ENCODE measurements at regions of chr19 and their contacts with region 1.

Region 1: DNA sequence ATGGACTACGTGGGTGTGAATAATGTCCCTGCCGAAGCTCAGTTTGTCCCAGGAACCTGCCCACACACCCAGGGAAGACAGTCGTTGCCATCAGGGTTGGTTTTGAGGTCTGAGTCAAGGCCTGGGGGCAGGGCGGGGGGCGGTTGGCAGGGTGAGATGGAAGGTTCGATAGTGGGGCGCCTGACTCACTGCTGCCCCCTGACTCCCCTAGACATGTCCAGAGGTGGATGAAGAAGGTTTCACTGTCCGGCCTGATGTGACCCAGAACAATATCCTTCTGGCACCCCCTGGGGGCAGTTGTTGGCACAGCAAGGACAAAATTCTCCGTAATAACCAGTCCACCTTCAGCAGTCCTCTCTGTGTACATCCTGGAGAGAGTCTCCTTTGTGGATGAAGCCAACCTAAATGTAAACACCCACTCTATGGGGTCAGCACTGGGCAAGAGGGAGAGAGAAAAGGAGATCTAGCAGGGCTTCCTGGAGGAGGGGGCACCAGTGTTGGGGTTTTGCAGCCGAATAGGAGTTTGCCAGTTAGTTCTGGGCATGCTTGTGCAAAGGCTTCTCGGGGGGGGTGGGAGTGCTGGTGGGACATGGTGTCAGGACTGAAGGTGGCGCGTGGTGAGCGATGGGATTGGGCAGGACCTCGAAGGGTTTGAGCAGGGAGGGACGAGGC is 19.6 kb upstream of the B3GNT3 start:
- DNase-seq: peak; percentile 87
- ATAC-seq: peak; percentile 13
- H3K4me3 Mint-ChIP-seq: no peak overlapping the region
- H3K27ac Mint-ChIP-seq: no peak overlapping the region
- H3K4me1 Mint-ChIP-seq: peaks cover 13% of the 10 kb centered on the region
- H3K27me3 Mint-ChIP-seq: no peaks in the 10 kb centered on the region; the same call in 1 of the 2 replicates
- CTCF ChIP-seq: peak; percentile 45; the same call in 1 of the 2 replicates

Region 2: DNA sequence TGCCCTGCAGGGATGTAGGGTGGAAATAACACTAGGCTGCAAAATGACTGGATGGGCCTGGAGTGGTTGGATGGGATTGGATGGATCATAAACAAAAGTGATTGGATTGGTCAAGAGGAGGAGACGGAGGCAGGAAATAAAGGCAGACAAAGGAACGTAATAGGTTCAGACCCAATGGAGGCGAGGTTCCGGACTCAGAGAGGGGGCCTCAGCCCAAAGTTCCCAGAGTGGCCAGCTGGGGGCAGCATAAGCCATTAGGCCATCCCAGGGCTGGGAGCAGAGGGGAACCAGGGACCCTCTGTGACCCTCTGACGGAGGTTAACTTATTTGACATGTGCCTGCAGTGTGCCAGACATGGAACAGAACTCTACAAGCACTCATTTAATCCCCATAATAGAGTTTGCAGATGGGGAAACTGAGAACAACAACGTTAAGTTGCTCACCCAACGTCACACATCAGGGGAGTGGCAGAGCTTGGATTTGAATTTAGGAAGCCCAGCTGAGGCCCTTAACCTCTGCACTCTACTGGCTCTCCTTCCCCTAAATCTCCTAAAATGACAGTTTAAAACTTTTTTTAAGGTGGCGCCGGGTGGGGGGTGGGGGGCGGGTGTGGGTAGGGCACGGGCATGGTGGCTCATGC is 71.4 kb before region 1 on chr19:
- CTCF ChIA-PET with region 1: interaction called, 10 read pairs
- POLR2A ChIA-PET with region 1: no interaction called
- DNase-seq: peak; percentile 89
- ATAC-seq: peak; percentile 83
- H3K4me3 Mint-ChIP-seq: no peak overlapping the region
- H3K27ac Mint-ChIP-seq: no peak overlapping the region
- H3K4me1 Mint-ChIP-seq: peaks cover 4% of the 10 kb centered on the region; the same call in 1 of the 2 replicates
- H3K27me3 Mint-ChIP-seq: peaks cover 30% of the 10 kb centered on the region
- CTCF ChIP-seq: peak; percentile 83

Region 3: GRCh38 chr19:17733127-17733526 is 42.3 kb before region 1 on chr19:
- CTCF ChIA-PET with region 1: no interaction called
- POLR2A ChIA-PET with region 1: no interaction called
- DNase-seq: no peak
- ATAC-seq: no peak
- H3K4me3 Mint-ChIP-seq: no peak overlapping the region
- H3K27ac Mint-ChIP-seq: no peak overlapping the region
- H3K4me1 Mint-ChIP-seq: no peaks in the 10 kb centered on the region
- H3K27me3 Mint-ChIP-seq: no peaks in the 10 kb centered on the region
- CTCF ChIP-seq: no peak

Region 4: GRCh38 chr19:17747205-17748098 is 27.9 kb before region 1 on chr19:
- CTCF ChIA-PET with region 1: interaction called, 14 read pairs
- POLR2A ChIA-PET with region 1: no interaction called
- DNase-seq: peak; percentile 94
- ATAC-seq: peak; percentile 99
- H3K4me3 Mint-ChIP-seq: peak overlapping the region; percentile 66
- H3K27ac Mint-ChIP-seq: no peak overlapping the region
- H3K4me1 Mint-ChIP-seq: peaks cover 9% of the 10 kb centered on the region
- H3K27me3 Mint-ChIP-seq: peaks cover 12% of the 10 kb centered on the region
- CTCF ChIP-seq: no peak

Region 5: GRCh38 chr19:17755977-17756670 is 19.3 kb before region 1 on chr19:
- CTCF ChIA-PET with region 1: interaction called, 22 read pairs
- POLR2A ChIA-PET with region 1: no interaction called
- DNase-seq: peak; percentile 86
- ATAC-seq: peak; percentile 81
- H3K4me3 Mint-ChIP-seq: no peak overlapping the region
- H3K27ac Mint-ChIP-seq: no peak overlapping the region
- H3K4me1 Mint-ChIP-seq: peaks cover 25% of the 10 kb centered on the region
- H3K27me3 Mint-ChIP-seq: no peaks in the 10 kb centered on the region; the same call in 1 of the 2 replicates
- CTCF ChIP-seq: no peak

Region 6: DNA sequence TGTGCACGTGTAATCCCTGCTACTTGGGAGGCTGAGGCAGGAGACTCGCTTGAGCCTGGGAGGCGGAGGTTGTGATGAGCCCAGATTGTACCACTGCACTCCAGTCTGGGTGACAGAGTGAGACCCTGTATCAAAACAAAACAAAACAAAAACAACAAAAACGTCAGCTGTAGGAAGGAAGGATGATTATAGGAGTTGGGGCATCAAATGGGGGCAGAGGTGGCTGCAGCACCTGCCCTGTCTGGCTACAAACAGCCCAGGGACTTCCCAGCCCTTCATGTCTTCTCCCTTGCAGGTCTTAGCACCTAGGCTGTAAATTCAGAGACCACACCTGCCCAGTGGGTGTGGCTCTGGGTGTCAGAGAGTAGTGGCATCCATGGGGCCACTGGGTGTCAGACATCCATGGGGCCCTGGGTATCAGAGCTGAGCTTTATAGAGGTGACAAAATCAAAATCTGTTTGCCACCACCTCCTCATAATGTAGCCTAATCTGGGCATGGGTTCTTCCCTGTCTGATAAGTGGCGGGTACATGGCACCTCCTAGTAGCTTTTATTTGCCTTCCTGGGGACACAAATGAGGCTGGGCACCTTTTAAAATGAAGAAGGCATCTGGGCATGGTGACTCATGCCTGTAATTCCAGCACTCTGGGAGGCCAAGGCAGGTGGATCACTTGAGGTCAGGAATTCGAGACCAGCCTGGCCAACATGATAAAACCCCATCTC is 14.8 kb after region 1 on chr19:
- CTCF ChIA-PET with region 1: interaction called, 13 read pairs
- POLR2A ChIA-PET with region 1: no interaction called
- DNase-seq: no peak
- ATAC-seq: no peak
- H3K4me3 Mint-ChIP-seq: no peak overlapping the region
- H3K27ac Mint-ChIP-seq: no peak overlapping the region
- H3K4me1 Mint-ChIP-seq: peaks cover 6% of the 10 kb centered on the region
- H3K27me3 Mint-ChIP-seq: peaks cover 14% of the 10 kb centered on the region
- CTCF ChIP-seq: no peak

Region 7: GRCh38 chr19:17909003-17909732 is 133.8 kb after region 1 on chr19:
- CTCF ChIA-PET with region 1: no interaction called
- POLR2A ChIA-PET with region 1: no interaction called
- DNase-seq: peak; percentile 23
- ATAC-seq: peak; percentile 87
- H3K4me3 Mint-ChIP-seq: no peak overlapping the region; the same call in 1 of the 2 replicates
- H3K27ac Mint-ChIP-seq: peak overlapping the region; percentile 95
- H3K4me1 Mint-ChIP-seq: peaks cover 8% of the 10 kb centered on the region
- H3K27me3 Mint-ChIP-seq: peaks cover 5% of the 10 kb centered on the region
- CTCF ChIP-seq: no peak

Measured in WTC11 (cell line).